ENCODE measurements at regions of chr1 and their contacts with region 1.

Region 1: GRCh38 chr1:198088360-198089071 is 68.3 kb upstream of the NEK7 start:
- DNase-seq: no peak
- ATAC-seq: peak; percentile 74
- H3K4me3 Mint-ChIP-seq: no peak overlapping the region
- H3K27ac Mint-ChIP-seq: peak overlapping the region; percentile 58
- H3K4me1 Mint-ChIP-seq: peaks cover 8% of the 10 kb centered on the region
- H3K27me3 Mint-ChIP-seq: no peaks in the 10 kb centered on the region
- CTCF ChIP-seq: peak; percentile 71

Region 2: DNA sequence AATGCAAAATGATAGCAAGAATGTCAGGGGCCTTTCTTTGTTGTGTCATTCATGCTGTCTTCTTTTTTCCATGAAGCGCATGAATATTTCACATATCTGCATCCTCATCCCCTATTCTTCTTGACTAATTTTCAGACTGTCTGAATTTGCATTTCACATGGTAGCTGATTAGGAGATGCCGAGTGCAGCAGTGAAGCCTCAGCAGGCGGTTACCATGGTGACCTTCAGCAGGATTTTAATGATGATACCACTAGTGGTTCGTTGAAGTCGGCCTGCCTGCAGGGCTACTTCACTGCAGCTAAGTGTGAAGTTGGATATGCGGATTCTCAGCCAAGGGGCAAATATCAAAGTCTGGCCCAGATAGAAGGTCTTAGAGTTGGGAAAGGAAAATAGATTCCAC is 210.1 kb after region 1 on chr1:
- CTCF ChIA-PET with region 1: no interaction called
- POLR2A ChIA-PET with region 1: no interaction called
- intact Hi-C with region 1: no loop called
- DNase-seq: no peak
- ATAC-seq: no peak
- H3K4me3 Mint-ChIP-seq: no peak overlapping the region
- H3K27ac Mint-ChIP-seq: no peak overlapping the region
- H3K4me1 Mint-ChIP-seq: peaks cover 11% of the 10 kb centered on the region
- H3K27me3 Mint-ChIP-seq: no peaks in the 10 kb centered on the region
- CTCF ChIP-seq: no peak

Region 3: GRCh38 chr1:198359024-198359653 is 270.6 kb after region 1 on chr1:
- CTCF ChIA-PET with region 1: interaction called, 3 read pairs
- POLR2A ChIA-PET with region 1: no interaction called
- intact Hi-C with region 1: loop called (anchors 2 kb)
- DNase-seq: no peak
- ATAC-seq: peak; percentile 27
- H3K4me3 Mint-ChIP-seq: no peak overlapping the region
- H3K27ac Mint-ChIP-seq: no peak overlapping the region
- H3K4me1 Mint-ChIP-seq: peaks cover 2% of the 10 kb centered on the region
- H3K27me3 Mint-ChIP-seq: no peaks in the 10 kb centered on the region
- CTCF ChIP-seq: peak; percentile 74

Region 4: GRCh38 chr1:198465201-198466144 is 377.0 kb after region 1 on chr1:
- CTCF ChIA-PET with region 1: interaction called, 7 read pairs
- POLR2A ChIA-PET with region 1: no interaction called
- intact Hi-C with region 1: loop called (anchors 2 kb)
- DNase-seq: no peak
- ATAC-seq: peak; percentile 76
- H3K4me3 Mint-ChIP-seq: no peak overlapping the region
- H3K27ac Mint-ChIP-seq: no peak overlapping the region
- H3K4me1 Mint-ChIP-seq: peaks cover 19% of the 10 kb centered on the region
- H3K27me3 Mint-ChIP-seq: no peaks in the 10 kb centered on the region
- CTCF ChIP-seq: peak; percentile 77

Measured in activated CD8-positive, alpha-beta T cell treated with anti-CD3 and anti-CD28 coated beads for 36 hours (primary cell).